WTC11 (cell line): ENCODE measurements at regions of chr4 and their contacts with region 1.

Region 1: DNA sequence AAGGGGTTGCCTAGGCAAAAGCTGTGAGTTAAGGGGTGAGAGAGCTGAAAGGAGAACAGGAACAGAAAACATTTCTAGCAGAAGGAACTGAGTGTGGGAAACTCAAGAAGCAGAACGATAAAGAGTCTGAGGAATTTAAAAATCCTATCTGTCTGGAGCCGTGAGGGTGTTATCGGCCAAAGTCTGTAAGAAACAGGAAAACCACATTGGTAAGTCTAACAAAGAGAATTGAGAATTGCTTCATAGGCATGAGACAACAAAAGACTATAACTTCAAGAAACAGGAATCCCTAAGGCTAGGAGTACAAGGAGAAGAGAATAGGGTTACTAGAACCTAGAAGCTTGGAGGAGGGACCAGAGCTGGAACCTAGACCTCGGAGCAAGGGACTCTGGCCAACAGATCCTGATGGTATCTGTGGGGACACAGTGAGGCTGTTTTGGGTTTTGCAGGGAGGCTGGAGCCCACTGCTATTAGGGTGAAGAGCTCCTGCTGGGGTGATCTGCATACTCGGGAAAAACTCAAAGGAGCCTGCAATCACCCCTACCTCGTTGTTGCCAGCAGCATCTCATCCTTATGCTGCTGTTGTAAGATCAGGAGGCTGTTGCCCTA is 175.6 kb downstream of the FBXO8 start:
- DNase-seq: peak; percentile 20
- ATAC-seq: peak; percentile 98
- H3K4me3 Mint-ChIP-seq: no peak overlapping the region
- H3K27ac Mint-ChIP-seq: no peak overlapping the region
- H3K4me1 Mint-ChIP-seq: peaks cover 9% of the 10 kb centered on the region
- H3K27me3 Mint-ChIP-seq: no peaks in the 10 kb centered on the region
- CTCF ChIP-seq: no peak

Region 2: GRCh38 chr4:173722075-173722474 is 385.8 kb before region 1 on chr4:
- CTCF ChIA-PET with region 1: no interaction called
- POLR2A ChIA-PET with region 1: no interaction called
- DNase-seq: no peak
- ATAC-seq: no peak
- H3K4me3 Mint-ChIP-seq: no peak overlapping the region
- H3K27ac Mint-ChIP-seq: no peak overlapping the region
- H3K4me1 Mint-ChIP-seq: no peaks in the 10 kb centered on the region
- H3K27me3 Mint-ChIP-seq: no peaks in the 10 kb centered on the region; the same call in 1 of the 2 replicates
- CTCF ChIP-seq: no peak

Region 3: GRCh38 chr4:173958445-173958844 is 149.4 kb before region 1 on chr4:
- CTCF ChIA-PET with region 1: no interaction called
- POLR2A ChIA-PET with region 1: no interaction called
- DNase-seq: no peak
- ATAC-seq: no peak
- H3K4me3 Mint-ChIP-seq: no peak overlapping the region
- H3K27ac Mint-ChIP-seq: no peak overlapping the region
- H3K4me1 Mint-ChIP-seq: no peaks in the 10 kb centered on the region
- H3K27me3 Mint-ChIP-seq: no peaks in the 10 kb centered on the region
- CTCF ChIP-seq: no peak

Region 4: GRCh38 chr4:174120446-174121295 is 12.8 kb after region 1 on chr4:
- CTCF ChIA-PET with region 1: interaction called, 12 read pairs
- POLR2A ChIA-PET with region 1: no interaction called
- DNase-seq: peak; percentile 41
- ATAC-seq: peak; percentile 70
- H3K4me3 Mint-ChIP-seq: peak overlapping the region; percentile 54
- H3K27ac Mint-ChIP-seq: no peak overlapping the region
- H3K4me1 Mint-ChIP-seq: 0 out of 2 replicates have a peak, but pooled peaks cover 4% of the 10 kb centered on the region
- H3K27me3 Mint-ChIP-seq: peaks cover 7% of the 10 kb centered on the region
- CTCF ChIP-seq: 0 out of 2 replicates have a peak, but pooled peaks have one; percentile 11